ENCODE measurements at regions of chr5 and their contacts with region 1.

Region 1: GRCh38 chr5:174935854-174936474 is 211.6 kb downstream of the MSX2 start:
- DNase-seq: peak; percentile 37
- H3K4me3 ChIP-seq: no peak overlapping the region
- H3K27ac ChIP-seq: no peak overlapping the region
- H3K4me1 ChIP-seq: no peaks in the 10 kb centered on the region
- H3K27me3 ChIP-seq: no peaks in the 10 kb centered on the region
- CTCF ChIP-seq: peak; percentile 66

Region 2: DNA sequence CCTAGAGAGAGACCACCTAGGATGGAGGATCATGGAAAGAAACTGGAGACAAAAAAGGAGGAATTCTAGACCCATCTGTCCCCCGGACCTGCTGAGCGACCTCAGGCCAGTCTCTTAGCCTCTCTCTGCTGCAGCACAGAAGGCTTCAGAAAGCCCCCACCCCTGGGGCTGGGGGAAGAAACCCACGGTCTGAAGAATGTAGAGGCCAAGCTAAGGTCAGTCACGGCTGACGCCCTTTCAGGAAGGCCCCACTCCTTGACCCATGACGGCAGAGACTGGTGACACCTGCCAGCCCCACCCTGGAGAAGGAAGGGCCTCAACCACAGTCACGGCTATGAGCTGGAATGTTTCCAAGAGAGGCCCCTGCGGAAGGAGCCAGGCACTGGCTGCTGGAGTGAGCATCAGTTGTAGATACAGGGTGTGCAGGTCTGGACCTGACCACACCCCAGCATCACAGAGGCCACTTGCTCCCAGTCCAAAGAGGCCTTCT is 1199.0 kb before region 1 on chr5:
- intact Hi-C with region 1: no loop called
- DNase-seq: peak; percentile 65
- H3K4me3 ChIP-seq: no peak overlapping the region
- H3K27ac ChIP-seq: no peak overlapping the region
- H3K4me1 ChIP-seq: no peaks in the 10 kb centered on the region
- H3K27me3 ChIP-seq: no peaks in the 10 kb centered on the region
- CTCF ChIP-seq: no peak

Region 3: GRCh38 chr5:174662025-174662424 is 273.9 kb before region 1 on chr5:
- intact Hi-C with region 1: no loop called
- DNase-seq: no peak
- H3K4me3 ChIP-seq: no peak overlapping the region
- H3K27ac ChIP-seq: no peak overlapping the region
- H3K4me1 ChIP-seq: no peaks in the 10 kb centered on the region
- H3K27me3 ChIP-seq: no peaks in the 10 kb centered on the region
- CTCF ChIP-seq: no peak

Region 4: DNA sequence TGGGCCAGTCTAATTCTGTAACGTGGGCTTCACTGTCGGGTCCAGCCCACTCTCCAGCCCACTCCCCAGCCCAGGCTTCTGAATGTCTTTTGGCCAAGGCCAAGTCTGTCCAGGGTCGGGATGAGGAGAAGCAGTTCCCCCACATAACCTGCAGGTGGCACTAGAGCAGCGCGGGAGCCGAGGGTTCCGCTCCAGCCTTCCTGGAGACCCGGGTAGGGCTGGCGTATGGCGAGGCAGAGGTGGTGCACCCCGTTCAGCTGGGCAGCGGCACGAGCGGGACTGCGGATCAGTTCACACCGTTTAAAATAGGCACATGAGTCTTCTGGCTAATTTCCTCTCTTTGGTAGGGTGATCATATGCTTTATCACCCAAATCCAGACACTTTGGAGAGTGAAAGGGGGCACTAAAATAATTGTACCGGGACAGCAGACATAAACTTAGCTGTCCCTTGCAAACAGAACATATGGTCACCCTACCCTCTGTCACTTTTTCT is 25.7 kb before region 1 on chr5:
- intact Hi-C with region 1: loop called (anchors 2 kb)
- DNase-seq: peak; percentile 58
- H3K4me3 ChIP-seq: no peak overlapping the region
- H3K27ac ChIP-seq: no peak overlapping the region
- H3K4me1 ChIP-seq: no peaks in the 10 kb centered on the region
- H3K27me3 ChIP-seq: no peaks in the 10 kb centered on the region
- CTCF ChIP-seq: peak; percentile 85

Measured in colonic mucosa (tissue), 4 donors.